ENCODE measurements at regions of chr1 and their contacts with region 1.

Region 1: DNA sequence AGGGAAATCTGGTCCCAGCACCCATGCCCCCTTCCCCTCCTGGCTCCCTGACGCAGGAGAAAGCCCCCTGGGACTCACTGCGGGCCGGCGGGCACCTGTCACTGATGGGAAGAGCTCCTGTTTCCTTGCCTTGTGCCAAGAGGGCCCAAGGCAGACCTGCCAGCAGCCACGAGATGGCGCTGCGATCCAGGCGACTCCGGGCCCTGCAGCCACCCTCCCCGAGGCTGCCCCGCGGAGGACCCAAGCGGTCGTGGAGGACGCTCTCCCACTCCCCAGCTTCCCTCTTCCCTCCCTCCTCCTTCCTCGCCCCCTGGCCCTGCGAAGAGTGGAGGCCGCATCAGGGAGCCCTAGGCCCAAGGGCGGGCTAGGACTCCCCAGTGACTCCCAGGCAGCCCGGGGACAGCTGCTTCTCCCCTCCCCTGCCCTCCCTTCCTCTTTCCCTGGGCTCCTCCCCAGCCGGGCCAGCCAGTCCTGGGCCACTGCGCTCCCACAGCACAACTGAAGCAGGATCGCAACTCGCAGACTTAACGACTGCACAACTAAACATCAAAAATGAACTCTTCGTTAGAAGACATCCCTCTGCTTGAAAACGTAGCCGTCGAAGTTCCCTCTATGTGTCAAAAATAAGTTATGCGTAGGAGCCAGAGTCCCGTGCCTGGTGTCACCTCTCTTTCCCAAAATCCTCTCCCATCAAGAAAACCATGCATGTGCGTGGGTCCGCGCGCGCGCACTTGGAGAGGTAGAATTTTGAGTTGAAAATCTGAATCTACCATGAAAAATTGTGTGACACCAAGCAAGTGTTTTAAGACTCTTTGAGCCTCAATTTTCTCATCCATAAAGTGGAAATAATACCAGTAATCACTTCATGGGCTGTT is 34.2 kb downstream of the BATF3 start:
- DNase-seq: peak; percentile 57 to 85 (median 78)
- ATAC-seq: peak; percentile 94
- H3K4me3 ChIP-seq: peak overlapping the region; percentile 51
- H3K4me3 Mint-ChIP-seq: peak overlapping the region; percentile 78 to 92 (median 84)
- H3K27ac ChIP-seq: no peak overlapping the region
- H3K27ac Mint-ChIP-seq: peak overlapping the region in 1 of 9 donors; percentile 64
- H3K4me1 ChIP-seq: peaks cover 0 to 6% of the 10 kb centered on the region in 2 donors
- H3K4me1 Mint-ChIP-seq: peaks cover 4 to 29% (median 5%) of the 10 kb centered on the region in 7 donors
- H3K27me3 ChIP-seq: no peaks in the 10 kb centered on the region
- H3K27me3 Mint-ChIP-seq: peaks cover 0 to 23% (median 10%) of the 10 kb centered on the region in 5 donors

Region 2: DNA sequence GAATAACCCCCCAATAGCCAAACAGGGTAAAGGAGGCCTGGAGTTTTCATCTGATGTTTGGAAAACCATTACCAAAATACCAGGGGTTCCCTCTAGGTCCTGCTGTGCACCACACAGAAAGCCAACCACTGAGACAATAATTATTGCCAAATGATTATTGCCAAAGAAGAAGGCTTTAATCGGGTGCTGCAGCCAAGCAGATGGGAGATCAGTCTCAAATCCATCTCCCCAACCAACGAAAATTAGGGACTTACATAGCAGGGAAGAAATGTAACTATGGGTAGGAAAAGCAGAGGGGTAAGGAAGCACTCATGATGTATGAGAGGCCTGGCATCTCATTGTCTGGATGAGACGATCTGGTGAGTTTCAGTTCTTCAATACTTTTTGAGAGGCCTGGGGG is 806.1 kb before region 1 on chr1:
- CTCF ChIA-PET with region 1: no interaction called
- POLR2A ChIA-PET with region 1: no interaction called
- intact Hi-C with region 1: no loop called
- DNase-seq: no peak
- ATAC-seq: no peak
- H3K4me3 ChIP-seq: no peak overlapping the region
- H3K4me3 Mint-ChIP-seq: no peak overlapping the region
- H3K27ac ChIP-seq: no peak overlapping the region
- H3K27ac Mint-ChIP-seq: no peak overlapping the region
- H3K4me1 ChIP-seq: no peaks in the 10 kb centered on the region
- H3K4me1 Mint-ChIP-seq: peaks cover 0 to 10% (median 7%) of the 10 kb centered on the region in 7 donors
- H3K27me3 ChIP-seq: no peaks in the 10 kb centered on the region
- H3K27me3 Mint-ChIP-seq: peaks cover 0 to 28% (median 3%) of the 10 kb centered on the region in 5 donors

Region 3: GRCh38 chr1:212749821-212750535 is 84.5 kb after region 1 on chr1:
- CTCF ChIA-PET with region 1: interaction called, 18 read pairs
- POLR2A ChIA-PET with region 1: interaction called, 3 read pairs
- intact Hi-C with region 1: no loop called
- DNase-seq: peak in 6 of 9 donors; percentile 3 to 30 (median 14)
- ATAC-seq: peak; percentile 58
- H3K4me3 ChIP-seq: no peak overlapping the region
- H3K4me3 Mint-ChIP-seq: peak overlapping the region; percentile 1 to 69 (median 48)
- H3K27ac ChIP-seq: peak overlapping the region; percentile 56
- H3K27ac Mint-ChIP-seq: peak overlapping the region; percentile 1 to 92 (median 88)
- H3K4me1 ChIP-seq: peaks cover 5 to 36% of the 10 kb centered on the region in 2 donors
- H3K4me1 Mint-ChIP-seq: peaks cover 36 to 73% (median 62%) of the 10 kb centered on the region in 7 donors
- H3K27me3 ChIP-seq: no peaks in the 10 kb centered on the region
- H3K27me3 Mint-ChIP-seq: no peaks in the 10 kb centered on the region

Region 4: DNA sequence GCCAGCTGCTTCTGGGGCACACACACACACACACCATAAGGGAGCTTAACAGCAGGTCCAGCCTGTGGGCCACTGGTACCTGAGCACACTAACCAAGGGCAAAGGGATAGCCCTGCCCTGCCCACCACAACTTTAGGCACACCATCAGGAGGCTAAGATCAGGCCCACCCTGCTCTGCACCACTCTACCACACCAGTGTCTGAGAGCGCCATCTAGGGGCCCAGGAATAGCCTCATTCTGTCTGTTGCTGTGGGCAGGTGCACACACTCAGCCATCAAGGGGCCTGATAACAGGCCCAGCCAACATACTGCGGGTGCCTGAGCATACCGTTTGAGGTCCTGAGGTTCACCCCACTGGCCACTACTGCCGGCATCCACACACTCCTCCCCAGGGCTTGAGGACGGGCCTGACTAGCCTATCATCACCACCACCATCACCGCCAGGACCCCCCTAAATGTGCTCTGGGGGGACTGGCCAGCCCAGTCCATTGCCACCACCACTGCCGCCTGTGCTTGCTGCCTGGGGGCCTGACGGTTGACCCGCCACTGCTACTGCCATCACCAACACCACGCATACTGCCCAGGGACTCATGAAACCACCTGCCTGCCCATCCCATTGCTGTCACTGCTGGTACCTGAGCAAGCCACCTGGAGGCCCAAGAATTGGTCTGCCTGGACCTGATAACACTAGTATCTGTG is 94.8 kb after region 1 on chr1:
- CTCF ChIA-PET with region 1: interaction called, 19 read pairs
- POLR2A ChIA-PET with region 1: interaction called, 3 read pairs
- intact Hi-C with region 1: loop called in 1 of 2 experiments (anchors 1 kb)
- DNase-seq: peak in 7 of 9 donors; percentile 16 to 49 (median 41)
- ATAC-seq: peak; percentile 87
- H3K4me3 ChIP-seq: no peak overlapping the region
- H3K4me3 Mint-ChIP-seq: peak overlapping the region in 1 of 10 donors; percentile 21
- H3K27ac ChIP-seq: no peak overlapping the region
- H3K27ac Mint-ChIP-seq: peak overlapping the region in 1 of 9 donors; percentile 25
- H3K4me1 ChIP-seq: no peaks in the 10 kb centered on the region
- H3K4me1 Mint-ChIP-seq: peaks cover 8 to 64% (median 30%) of the 10 kb centered on the region in 7 donors
- H3K27me3 ChIP-seq: no peaks in the 10 kb centered on the region
- H3K27me3 Mint-ChIP-seq: no peaks in the 10 kb centered on the region

Region 5: GRCh38 chr1:212777151-212777550 is 111.7 kb after region 1 on chr1:
- CTCF ChIA-PET with region 1: interaction called, 60 read pairs
- POLR2A ChIA-PET with region 1: no interaction called
- intact Hi-C with region 1: loop called (anchors 1 kb)
- DNase-seq: no peak
- ATAC-seq: no peak
- H3K4me3 ChIP-seq: no peak overlapping the region
- H3K4me3 Mint-ChIP-seq: no peak overlapping the region
- H3K27ac ChIP-seq: no peak overlapping the region
- H3K27ac Mint-ChIP-seq: peak overlapping the region in 2 of 9 donors; percentile 13 to 60
- H3K4me1 ChIP-seq: no peaks in the 10 kb centered on the region
- H3K4me1 Mint-ChIP-seq: peaks cover 4 to 33% (median 19%) of the 10 kb centered on the region in 7 donors
- H3K27me3 ChIP-seq: no peaks in the 10 kb centered on the region
- H3K27me3 Mint-ChIP-seq: no peaks in the 10 kb centered on the region

Region 6: DNA sequence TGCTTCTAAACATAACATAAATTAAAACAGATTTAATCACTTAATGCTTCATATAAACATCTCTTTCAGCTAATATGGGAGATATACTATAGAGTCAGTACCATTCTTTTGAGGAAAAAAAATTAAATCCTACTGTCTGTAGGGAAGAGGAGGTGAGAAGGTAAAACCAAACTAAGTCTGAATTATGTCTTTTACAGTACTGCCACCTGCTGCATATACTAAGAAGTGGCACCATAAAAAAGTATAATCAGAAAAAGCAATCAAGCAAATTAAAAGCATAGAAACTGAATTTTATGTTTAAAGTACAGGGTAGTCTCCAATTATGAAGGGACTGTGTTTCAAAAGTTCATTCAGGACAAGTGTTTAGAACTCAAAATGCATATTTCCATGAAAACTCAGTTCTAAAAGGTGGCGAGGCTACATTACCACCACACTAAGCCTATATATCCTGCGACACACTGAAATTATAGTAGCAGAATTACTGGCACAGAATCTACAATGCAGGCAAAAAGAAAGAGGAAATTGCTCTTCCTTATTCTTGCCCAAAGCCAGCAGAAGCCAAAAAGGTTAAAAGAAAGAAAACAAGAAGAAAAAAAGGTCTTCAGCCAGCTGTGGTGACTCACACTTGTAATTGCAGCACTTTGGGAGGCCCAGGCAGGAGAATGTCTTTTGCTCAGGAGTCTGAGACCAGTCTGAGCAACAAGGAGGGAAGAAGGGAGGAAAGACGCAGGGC is 117.1 kb after region 1 on chr1:
- CTCF ChIA-PET with region 1: interaction called, 60 read pairs
- POLR2A ChIA-PET with region 1: no interaction called
- intact Hi-C with region 1: loop called (anchors 1 kb)
- DNase-seq: peak in 6 of 9 donors; percentile 4 to 45 (median 34)
- ATAC-seq: peak; percentile 73
- H3K4me3 ChIP-seq: no peak overlapping the region
- H3K4me3 Mint-ChIP-seq: no peak overlapping the region
- H3K27ac ChIP-seq: no peak overlapping the region
- H3K27ac Mint-ChIP-seq: peak overlapping the region in 1 of 9 donors; percentile 31
- H3K4me1 ChIP-seq: no peaks in the 10 kb centered on the region
- H3K4me1 Mint-ChIP-seq: peaks cover 0 to 18% (median 6%) of the 10 kb centered on the region in 7 donors
- H3K27me3 ChIP-seq: no peaks in the 10 kb centered on the region
- H3K27me3 Mint-ChIP-seq: no peaks in the 10 kb centered on the region

Region 7: GRCh38 chr1:212994926-212995325 is 329.4 kb after region 1 on chr1:
- CTCF ChIA-PET with region 1: interaction called, 12 read pairs
- POLR2A ChIA-PET with region 1: no interaction called
- intact Hi-C with region 1: loop called (anchors 1 kb)
- DNase-seq: no peak
- ATAC-seq: no peak
- H3K4me3 ChIP-seq: no peak overlapping the region
- H3K4me3 Mint-ChIP-seq: no peak overlapping the region
- H3K27ac ChIP-seq: no peak overlapping the region
- H3K27ac Mint-ChIP-seq: no peak overlapping the region
- H3K4me1 ChIP-seq: no peaks in the 10 kb centered on the region
- H3K4me1 Mint-ChIP-seq: peaks cover 0 to 12% (median 7%) of the 10 kb centered on the region in 7 donors
- H3K27me3 ChIP-seq: no peaks in the 10 kb centered on the region
- H3K27me3 Mint-ChIP-seq: no peaks in the 10 kb centered on the region